ENCODE measurements at regions of chr5 and their contacts with region 1.

Region 1: DNA sequence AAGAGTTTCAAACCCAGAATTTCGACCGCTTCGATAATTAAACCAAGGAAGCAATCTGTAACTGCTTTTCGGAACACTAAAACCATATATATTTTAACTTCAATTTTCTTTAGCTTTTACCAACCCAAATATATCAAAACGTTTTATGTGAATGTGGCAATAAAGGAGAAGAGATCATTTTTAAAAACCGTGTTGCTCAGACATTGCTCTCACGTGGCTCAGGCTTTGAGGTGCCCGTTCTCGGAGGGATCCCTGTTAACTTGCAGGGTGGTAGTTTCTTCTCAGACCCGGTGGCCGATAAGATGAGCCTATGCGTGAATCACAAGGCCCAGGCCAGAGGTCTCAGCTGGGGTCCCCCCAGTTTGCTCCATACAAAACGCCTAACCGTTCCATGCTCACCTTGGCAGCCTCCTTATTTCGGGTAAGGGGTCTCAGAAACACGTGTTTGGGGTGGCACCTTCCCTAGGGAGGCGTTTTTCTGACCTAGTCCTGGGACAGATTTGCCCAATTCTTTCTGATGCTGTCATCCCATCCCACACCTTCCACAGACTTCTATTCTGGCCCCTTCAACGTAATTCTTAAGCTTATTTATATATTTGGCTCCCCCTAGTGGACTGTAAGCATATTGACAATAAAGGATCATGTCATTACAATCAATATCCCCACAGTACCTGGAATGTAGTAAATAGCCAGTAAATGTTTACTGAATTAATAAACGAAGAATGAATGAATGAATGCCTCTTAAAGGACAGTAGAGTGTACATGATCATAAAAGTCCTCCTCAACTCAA is 48.1 kb downstream of the THBS4 start:
- DNase-seq: peak; percentile 40
- ATAC-seq: peak; percentile 82
- H3K4me3 Mint-ChIP-seq: peak overlapping the region; percentile 41
- H3K27ac Mint-ChIP-seq: peak overlapping the region; percentile 76
- H3K4me1 Mint-ChIP-seq: peaks cover 12% of the 10 kb centered on the region
- H3K27me3 Mint-ChIP-seq: no peaks in the 10 kb centered on the region

Region 2: GRCh38 chr5:79697222-79698170 is 385.8 kb before region 1 on chr5:
- CTCF ChIA-PET with region 1: interaction called, 10 read pairs
- POLR2A ChIA-PET with region 1: no interaction called
- intact Hi-C with region 1: loop called (anchors 2 kb)
- DNase-seq: no peak
- ATAC-seq: peak; percentile 51
- H3K4me3 Mint-ChIP-seq: no peak overlapping the region
- H3K27ac Mint-ChIP-seq: no peak overlapping the region
- H3K4me1 Mint-ChIP-seq: peaks cover 13% of the 10 kb centered on the region
- H3K27me3 Mint-ChIP-seq: no peaks in the 10 kb centered on the region

Region 3: DNA sequence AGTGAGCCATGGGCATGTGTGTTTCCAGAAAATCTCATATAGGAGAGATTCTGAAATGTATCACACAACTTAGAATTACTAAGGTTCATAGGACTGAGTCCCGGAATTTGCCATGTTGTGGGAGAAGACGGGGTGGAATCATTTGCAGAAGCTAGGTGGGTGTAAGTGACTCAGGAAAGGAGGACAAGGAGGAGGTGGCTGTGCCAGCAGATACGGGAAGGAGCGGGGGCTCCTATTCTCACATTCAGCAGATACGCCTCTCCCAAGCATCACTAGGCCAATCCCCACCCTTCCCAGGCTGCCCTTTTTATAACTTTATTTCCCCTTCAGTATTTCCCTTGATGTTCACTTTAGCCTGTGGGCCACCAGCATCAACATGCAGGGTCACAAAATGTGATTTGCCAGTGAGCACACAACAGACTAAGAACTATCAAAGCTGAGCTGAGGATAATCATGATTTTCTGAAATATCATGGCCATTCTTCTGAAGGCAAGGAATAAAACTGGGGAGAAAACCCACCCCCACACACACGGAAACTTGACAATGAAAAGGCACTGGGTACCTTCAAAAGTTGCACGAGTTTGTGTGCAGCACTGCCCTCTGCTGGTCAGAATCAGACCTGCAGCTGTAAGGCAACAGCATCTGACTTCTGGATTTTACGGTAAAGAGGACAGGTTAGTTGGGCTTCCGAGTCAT is 225.4 kb before region 1 on chr5:
- CTCF ChIA-PET with region 1: interaction called, 14 read pairs
- POLR2A ChIA-PET with region 1: no interaction called
- intact Hi-C with region 1: loop called (anchors 1 kb)
- DNase-seq: peak; percentile 91
- ATAC-seq: peak; percentile 60
- H3K4me3 Mint-ChIP-seq: no peak overlapping the region
- H3K27ac Mint-ChIP-seq: no peak overlapping the region
- H3K4me1 Mint-ChIP-seq: peaks cover 5% of the 10 kb centered on the region
- H3K27me3 Mint-ChIP-seq: no peaks in the 10 kb centered on the region

Region 4: DNA sequence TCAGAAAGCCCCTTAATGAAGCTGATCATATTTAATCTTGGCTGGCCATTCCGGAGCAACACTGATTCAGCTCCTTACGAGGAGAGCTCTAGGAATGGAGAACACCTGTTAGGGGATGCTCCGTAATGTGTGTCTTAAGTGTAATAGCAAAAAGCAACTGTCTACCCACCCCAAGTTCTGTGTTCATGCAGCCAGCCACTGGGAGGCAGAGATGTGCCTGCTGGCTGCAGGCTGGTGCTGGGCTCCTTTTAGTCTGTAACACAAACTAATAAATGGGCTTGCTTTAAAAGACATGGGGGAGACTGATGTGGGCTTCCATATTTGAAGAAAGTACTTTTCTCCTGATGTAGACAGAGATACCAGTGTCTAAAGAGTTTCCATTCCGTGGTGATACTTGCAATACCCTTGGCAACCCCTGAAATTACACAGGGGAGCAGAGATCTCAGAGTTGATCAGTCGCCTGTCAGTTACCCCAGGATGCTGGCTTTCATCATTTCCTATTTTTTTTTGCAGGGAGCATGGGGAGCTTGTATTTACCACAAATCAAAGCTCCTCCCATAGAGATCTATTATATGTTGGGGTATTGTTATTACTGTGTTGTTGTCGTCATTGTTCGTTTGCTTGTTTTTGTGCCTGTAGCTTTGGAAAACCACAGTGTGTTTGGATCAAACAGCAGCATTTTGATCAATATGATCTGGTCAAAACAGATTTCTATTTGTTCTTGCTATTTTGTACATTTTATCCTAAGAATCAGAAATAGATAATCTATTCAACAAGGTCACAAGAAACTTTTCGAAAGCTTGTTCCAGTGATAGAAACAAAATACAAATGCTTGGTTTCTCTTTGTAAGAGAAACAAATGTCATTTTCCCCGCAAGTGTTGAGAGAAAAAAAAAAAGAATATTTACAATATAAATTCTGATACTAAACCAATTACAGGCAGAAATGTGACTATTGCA is 158.1 kb before region 1 on chr5:
- CTCF ChIA-PET with region 1: interaction called, 21 read pairs
- POLR2A ChIA-PET with region 1: no interaction called
- intact Hi-C with region 1: loop called (anchors 1 kb)
- DNase-seq: peak; percentile 48
- ATAC-seq: peak; percentile 73
- H3K4me3 Mint-ChIP-seq: no peak overlapping the region
- H3K27ac Mint-ChIP-seq: no peak overlapping the region
- H3K4me1 Mint-ChIP-seq: no peaks in the 10 kb centered on the region
- H3K27me3 Mint-ChIP-seq: peaks cover 2% of the 10 kb centered on the region

Region 5: GRCh38 chr5:80093796-80094195 is 10.5 kb after region 1 on chr5:
- CTCF ChIA-PET with region 1: interaction called, 22 read pairs
- POLR2A ChIA-PET with region 1: no interaction called
- intact Hi-C with region 1: no loop called
- DNase-seq: no peak
- ATAC-seq: no peak
- H3K4me3 Mint-ChIP-seq: no peak overlapping the region
- H3K27ac Mint-ChIP-seq: peak overlapping the region; percentile 39
- H3K4me1 Mint-ChIP-seq: peaks cover 23% of the 10 kb centered on the region
- H3K27me3 Mint-ChIP-seq: no peaks in the 10 kb centered on the region

Region 6: DNA sequence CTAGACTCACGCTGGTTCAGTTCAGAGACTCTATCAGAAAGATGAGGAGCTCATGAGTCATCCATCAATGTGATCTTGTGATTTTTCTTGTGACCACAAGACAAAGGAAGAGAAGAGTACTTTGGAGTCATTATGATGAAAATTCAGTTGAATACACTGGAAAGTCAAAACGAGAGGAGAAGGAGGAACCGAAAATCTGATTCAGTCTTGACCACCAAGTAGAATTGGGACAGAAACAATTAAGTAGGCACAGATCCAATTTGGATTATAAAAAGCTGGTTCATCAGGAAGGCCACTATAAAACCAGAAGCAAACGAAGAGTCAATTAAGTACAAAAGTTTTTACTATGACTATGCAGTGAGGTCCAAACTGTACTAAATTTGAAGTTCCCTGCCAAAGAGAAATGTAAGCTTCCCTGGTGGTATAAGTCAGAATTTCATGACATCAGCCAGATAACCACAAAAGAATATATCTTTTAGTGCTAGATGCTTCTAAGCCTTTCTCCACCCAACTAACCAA is 42.7 kb after region 1 on chr5:
- CTCF ChIA-PET with region 1: no interaction called
- POLR2A ChIA-PET with region 1: no interaction called
- intact Hi-C with region 1: no loop called
- DNase-seq: peak; percentile 33
- ATAC-seq: peak; percentile 92
- H3K4me3 Mint-ChIP-seq: peak overlapping the region; percentile 44
- H3K27ac Mint-ChIP-seq: peak overlapping the region; percentile 61
- H3K4me1 Mint-ChIP-seq: peaks cover 50% of the 10 kb centered on the region
- H3K27me3 Mint-ChIP-seq: no peaks in the 10 kb centered on the region

Region 7: DNA sequence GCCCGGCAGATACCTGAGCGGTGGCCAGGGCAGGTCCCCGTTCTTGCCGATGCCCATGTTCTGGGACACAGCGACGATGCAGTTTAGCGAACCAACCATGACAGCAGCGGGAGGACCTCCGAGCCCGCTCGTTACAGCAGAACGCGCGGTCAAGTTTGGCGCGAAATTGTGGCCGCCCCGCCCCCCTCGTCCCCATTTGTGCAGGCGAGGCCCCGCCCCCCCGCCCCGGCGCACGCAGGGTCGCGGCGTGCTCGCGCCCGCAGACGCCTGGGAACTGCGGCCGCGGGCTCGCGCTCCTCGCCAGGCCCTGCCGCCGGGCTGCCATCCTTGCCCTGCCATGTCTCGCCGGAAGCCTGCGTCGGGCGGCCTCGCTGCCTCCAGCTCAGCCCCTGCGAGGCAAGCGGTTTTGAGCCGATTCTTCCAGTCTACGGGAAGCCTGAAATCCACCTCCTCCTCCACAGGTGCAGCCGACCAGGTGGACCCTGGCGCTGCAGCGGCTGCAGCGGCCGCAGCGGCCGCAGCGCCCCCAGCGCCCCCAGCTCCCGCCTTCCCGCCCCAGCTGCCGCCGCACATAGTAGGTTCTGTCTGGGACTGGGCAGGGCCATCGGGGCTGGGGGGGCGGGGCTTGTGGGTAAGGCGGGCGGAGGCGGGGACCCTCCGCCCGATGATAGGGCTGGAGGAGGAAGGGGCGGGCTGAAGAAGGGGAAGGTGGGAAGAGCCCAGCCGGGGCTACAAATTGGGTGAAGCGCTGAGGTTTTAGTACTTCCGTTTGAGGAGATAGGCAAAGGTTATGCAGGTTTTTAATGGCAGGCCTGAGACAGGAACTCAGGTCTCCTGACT is 571.3 kb after region 1 on chr5 and contains the starts of genes DHFR and MSH3:
- CTCF ChIA-PET with region 1: no interaction called
- POLR2A ChIA-PET with region 1: no interaction called
- intact Hi-C with region 1: loop called in 1 of 2 experiments (anchors 10 kb)
- DNase-seq: peak; percentile 95
- ATAC-seq: peak; percentile 69
- H3K4me3 Mint-ChIP-seq: peak within 1 kb of the TSS; percentile 94
- H3K27ac Mint-ChIP-seq: peak within 1 kb of the TSS; percentile 99
- H3K4me1 Mint-ChIP-seq: peaks cover 21% of the 10 kb centered on the region
- H3K27me3 Mint-ChIP-seq: no peaks in the 10 kb centered on the region
- total RNA-seq, gene DHFR: 105 to 107 TPM
- total RNA-seq, gene MSH3: 25.6 to 27.1 TPM

Measured in activated CD4-positive, alpha-beta T cell treated with anti-CD3 and anti-CD28 coated beads for 36 hours (primary cell).